ENCODE measurements at regions of chr1 and their contacts with region 1.

Region 1: DNA sequence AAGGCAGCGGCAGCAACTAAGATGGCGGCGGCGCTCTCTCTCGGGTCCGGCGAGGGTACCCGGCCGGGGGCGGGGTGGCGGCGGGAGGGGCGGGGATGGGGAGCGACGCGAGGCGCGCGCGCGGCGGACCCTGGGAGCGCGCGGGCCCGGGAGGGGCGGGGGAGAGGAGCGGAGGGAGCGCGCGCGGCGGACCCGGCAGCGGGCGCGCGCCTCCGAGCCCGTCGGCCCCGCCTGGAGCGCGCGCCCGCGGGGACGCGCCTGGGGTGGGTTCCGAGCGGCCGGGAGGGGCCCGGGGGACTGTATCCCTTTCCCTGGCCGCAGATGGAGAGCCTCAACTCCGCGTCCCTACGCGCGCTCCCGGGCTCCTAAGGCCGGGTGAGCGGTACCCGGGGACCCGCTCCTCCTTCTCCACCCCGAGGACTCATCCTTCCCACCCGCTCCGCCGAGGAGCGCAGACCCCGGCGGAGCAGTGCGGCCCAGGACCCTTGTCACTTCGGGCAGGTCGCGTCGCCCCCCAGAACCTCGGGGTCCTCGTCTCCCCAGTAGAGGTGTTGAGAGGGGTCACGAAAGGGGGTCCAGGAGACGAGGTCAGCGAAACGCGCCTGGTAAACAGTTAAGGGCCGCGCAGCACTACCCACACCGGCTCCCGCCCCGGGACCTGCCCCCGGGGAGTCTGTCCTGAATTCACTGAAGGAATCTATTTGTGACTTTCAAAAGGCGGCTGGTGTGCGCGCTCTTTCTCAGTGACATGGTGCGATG is at the start of gene CLSTN1:
- DNase-seq: peak; percentile 76 to 95 (median 90)
- H3K4me3 ChIP-seq: peak within 1 kb of the TSS; percentile 71 to 96 (median 89)
- H3K27ac ChIP-seq: peak within 1 kb of the TSS; percentile 81 to 99 (median 95)
- H3K27me3 ChIP-seq: no peaks in the 10 kb centered on the region
- CTCF ChIP-seq: peak in 1 of 56 donors; percentile 15
- total RNA-seq, gene CLSTN1: 260 to 770 (median 557) TPM

Region 2: GRCh38 chr1:9438431-9439073 is 385.6 kb before region 1 on chr1:
- intact Hi-C with region 1: loop called in 1 of 2 experiments (anchors 10 kb)
- DNase-seq: peak in 7 of 10 donors; percentile 43 to 75 (median 57)
- H3K4me3 ChIP-seq: peak overlapping the region in 8 of 59 donors; percentile 3 to 40 (median 20)
- H3K27ac ChIP-seq: peak overlapping the region; percentile 35 to 94 (median 85)
- H3K27me3 ChIP-seq: no peaks in the 10 kb centered on the region
- CTCF ChIP-seq: no peak

Region 3: DNA sequence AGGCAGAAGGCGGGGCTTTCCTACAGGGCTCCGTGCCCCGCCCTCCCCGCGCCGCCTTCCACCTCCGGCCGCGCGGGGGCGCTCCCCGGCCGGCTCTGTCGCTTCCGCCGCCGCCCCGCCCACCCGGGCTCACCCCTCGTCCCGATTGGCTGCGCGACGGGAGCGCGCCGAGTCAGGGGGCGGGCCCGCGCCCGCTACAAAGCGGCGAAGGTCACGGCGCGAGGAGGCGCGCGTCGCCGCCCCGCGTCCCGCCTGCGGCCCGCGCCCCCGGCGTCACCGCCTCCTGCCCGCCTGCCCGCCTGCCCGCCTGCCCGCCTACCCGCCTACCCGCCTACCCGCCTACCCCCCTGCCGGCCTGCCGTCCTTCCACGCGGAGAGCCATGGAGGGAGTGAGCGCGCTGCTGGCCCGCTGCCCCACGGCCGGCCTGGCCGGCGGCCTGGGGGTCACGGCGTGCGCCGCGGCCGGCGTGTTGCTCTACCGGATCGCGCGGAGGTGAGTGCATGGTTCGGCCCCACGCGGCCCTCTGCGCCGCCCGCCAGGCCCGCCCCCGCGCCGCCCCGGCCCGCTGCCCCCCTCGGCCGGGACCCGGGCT is 235.5 kb before region 1 on chr1 and contains the start of gene TMEM201:
- intact Hi-C with region 1: loop called in 1 of 2 experiments (anchors 2 kb)
- DNase-seq: peak; percentile 84 to 95 (median 92)
- H3K4me3 ChIP-seq: peak within 1 kb of the TSS; percentile 32 to 89 (median 75)
- H3K27ac ChIP-seq: peak within 1 kb of the TSS in 55 of 59 donors; percentile 33 to 92 (median 80)
- H3K27me3 ChIP-seq: no peaks in the 10 kb centered on the region
- CTCF ChIP-seq: peak; percentile 50 to 98 (median 88)
- total RNA-seq, gene TMEM201: 15.4 to 35.6 (median 20.9) TPM

Region 4: DNA sequence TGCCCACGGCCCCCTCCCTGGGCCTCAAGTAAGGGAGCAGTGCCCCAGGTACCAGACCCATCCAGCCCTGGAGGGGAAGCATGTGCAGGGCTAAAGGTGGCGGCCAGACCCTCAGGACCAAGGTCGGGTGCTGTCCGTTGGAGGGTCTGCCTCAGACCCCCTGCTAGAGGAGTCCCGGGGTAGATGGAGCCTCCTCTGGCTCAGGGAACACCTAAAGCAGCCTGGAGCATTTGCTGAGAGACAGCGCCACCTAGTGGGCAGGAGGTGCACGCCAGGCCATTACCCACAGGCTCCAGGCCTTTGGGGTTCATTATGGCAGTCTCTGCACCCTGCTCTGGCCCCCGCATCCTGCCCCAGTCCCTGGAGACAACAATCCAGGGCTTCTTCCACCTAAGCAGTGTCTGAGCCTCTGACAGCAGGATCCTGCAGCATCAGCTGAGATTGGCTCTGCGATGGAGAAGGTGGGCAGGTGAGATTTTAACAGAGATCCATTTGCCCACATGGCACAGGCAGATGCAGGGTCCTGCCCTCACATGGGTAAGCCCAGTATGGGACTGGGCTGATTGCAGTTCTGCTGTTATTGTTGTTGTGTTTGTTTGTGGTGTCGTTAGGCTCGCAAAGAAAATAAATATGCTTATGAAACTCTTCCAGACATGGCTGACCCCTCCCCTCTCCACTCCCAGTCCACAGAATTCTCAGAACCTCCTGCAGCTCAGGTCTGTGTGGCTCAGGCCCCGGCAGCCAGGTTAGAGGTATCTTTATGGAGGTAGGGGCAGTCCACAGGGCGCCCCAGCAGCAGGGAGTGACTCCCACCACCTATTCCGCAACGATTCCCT is 43.5 kb after region 1 on chr1:
- intact Hi-C with region 1: loop called in 1 of 2 experiments (anchors 2 kb)
- DNase-seq: peak; percentile 77 to 94 (median 88)
- H3K4me3 ChIP-seq: no peak overlapping the region
- H3K27ac ChIP-seq: peak overlapping the region in 5 of 59 donors; percentile 12 to 51 (median 31)
- H3K27me3 ChIP-seq: no peaks in the 10 kb centered on the region
- CTCF ChIP-seq: peak; percentile 94 to 100 (median 98)

Region 5: DNA sequence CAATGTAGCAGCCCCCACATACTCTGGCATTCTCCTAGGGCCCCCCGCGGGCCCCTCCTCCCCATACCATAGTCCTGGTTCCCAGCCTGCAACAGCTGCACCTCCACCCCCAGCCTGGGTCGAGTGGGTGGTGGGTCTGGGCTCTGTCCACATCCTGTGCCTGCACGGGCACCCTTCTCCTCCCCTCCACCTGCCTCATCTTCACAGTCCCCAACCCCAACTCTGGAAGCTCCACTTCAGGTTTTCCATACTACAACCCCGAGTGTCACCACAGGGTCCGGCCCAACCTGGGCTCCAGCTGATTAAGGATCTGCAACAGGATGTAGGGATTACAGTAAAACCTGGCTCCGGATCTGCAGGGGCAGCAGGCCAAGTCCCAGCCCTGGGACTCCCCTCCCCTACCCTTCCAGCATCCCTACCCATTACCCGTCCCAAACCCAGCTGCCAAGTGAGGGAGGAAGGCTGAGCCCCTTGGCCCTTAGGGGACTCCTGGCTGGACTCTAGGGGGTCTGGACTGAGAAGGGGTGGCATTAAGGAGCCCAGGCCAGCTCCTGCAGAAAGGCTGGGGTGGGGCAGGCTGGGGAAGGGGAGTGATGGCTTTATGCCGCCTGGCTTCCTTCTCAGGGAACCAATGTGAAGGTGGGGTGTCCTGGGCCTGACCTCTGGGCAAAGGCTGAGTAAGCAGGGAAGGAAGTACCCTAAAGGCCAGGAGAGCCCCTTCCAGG is 855.5 kb after region 1 on chr1:
- intact Hi-C with region 1: no loop called
- DNase-seq: peak in 1 of 10 donors; percentile 20
- H3K4me3 ChIP-seq: no peak overlapping the region
- H3K27ac ChIP-seq: no peak overlapping the region
- H3K27me3 ChIP-seq: no peaks in the 10 kb centered on the region
- CTCF ChIP-seq: no peak

Region 6: GRCh38 chr1:10694633-10695627 is 870.8 kb after region 1 on chr1:
- intact Hi-C with region 1: loop called in 1 of 2 experiments (anchors 10 kb)
- DNase-seq: peak; percentile 60 to 91 (median 78)
- H3K4me3 ChIP-seq: peak overlapping the region in 58 of 59 donors; percentile 11 to 74 (median 55)
- H3K27ac ChIP-seq: peak overlapping the region in 25 of 59 donors; percentile 6 to 82 (median 60)
- H3K27me3 ChIP-seq: no peaks in the 10 kb centered on the region
- CTCF ChIP-seq: no peak

Measured in dorsolateral prefrontal cortex (tissue), 120 donors.